ENCODE measurements at regions of chr20 and their contacts with region 1.

Region 1: GRCh38 chr20:41095110-41095969 is 42.0 kb upstream of the PLCG1 start:
- DNase-seq: peak; percentile 66
- ATAC-seq: peak; percentile 85

Region 2: DNA sequence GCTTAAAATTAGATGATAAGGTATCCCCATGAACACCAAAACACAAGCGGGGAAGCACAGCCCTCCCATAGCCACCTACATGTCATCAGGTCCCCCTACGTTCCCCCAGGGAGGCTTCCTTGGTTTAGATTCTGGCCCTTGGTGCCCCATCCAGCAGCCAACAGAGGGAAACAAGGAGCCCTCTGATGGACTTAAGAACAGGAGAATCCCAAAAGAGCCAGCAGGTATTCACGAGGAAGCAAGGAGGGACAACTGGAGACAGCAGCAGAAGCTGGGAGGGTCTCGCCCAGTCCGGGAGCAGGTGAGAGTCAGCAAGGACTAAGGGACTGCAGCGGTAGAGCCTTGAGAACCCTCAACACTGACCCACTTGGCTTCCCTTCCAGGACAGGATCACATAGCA is 125.1 kb before region 1 on chr20:
- intact Hi-C with region 1: loop called (anchors 5 kb)
- DNase-seq: no peak
- ATAC-seq: no peak